ENCODE measurements at regions of chr11 and their contacts with region 1.

Region 1: GRCh38 chr11:2951231-2952110 is 22.3 kb upstream of the PHLDA2 start:
- DNase-seq: no peak
- H3K4me3 ChIP-seq: no peak overlapping the region
- CTCF ChIP-seq: no peak
- POLR2A ChIP-seq: no peak

Region 2: DNA sequence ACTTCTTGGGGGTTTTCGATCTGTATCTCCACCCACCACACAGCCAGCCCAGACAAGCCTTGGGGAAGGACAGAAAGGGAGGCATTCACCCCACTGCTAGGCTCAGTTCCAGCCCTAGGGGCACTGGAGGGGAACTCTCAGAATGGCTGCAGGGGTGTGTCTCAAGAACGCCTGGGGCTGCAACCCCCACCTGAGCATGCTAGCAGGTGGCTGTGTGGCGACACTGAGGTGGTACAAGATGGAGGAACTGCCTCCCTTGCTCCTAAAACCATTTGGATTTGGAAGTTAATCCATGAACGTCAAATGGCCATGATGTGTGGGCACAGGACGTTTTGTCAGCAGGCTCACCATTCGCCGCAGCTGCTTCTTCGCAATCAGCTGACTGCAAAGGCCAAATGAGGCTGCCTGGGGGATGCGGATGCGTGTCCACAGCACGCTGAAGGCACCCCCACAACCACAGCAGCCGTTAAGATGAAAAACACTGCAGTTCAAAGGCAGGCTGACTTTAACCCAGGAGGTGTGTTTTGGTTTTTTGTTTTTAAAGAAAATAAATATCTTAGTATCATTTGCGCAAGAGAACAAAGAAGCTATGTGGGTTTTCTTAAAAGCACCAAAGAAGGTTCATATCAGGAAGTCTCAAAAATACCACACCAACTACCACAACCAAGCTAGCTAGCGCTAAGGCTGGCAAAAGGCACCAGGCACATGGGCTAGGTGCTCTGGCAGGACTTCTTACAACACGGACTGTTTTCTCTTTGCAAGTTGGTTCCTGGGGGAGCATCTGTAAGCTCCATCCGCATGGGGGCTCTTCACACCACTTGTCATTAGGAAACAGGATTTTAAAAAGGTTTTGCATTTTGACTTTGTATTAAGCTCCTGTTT is 62.8 kb after region 1 on chr11:
- intact Hi-C with region 1: loop called (anchors 10 kb)
- DNase-seq: no peak
- H3K4me3 ChIP-seq: no peak overlapping the region
- CTCF ChIP-seq: no peak
- POLR2A ChIP-seq: no peak

Measured in lower leg skin (tissue), 4 donors.